Activated naive CD4-positive, alpha-beta T cell treated with anti-CD3 and anti-CD28 coated beads for 36 hours (primary cell): ENCODE measurements at regions of chr19 and their contacts with region 1.

Region 1: GRCh38 chr19:16371540-16371986 is 46.9 kb downstream of the KLF2 start:
- DNase-seq: peak; percentile 93
- H3K4me3 Mint-ChIP-seq: peak overlapping the region; percentile 30
- H3K27ac Mint-ChIP-seq: peak overlapping the region; percentile 48
- H3K4me1 Mint-ChIP-seq: peaks cover 40% of the 10 kb centered on the region
- H3K27me3 Mint-ChIP-seq: peaks cover 15% of the 10 kb centered on the region

Region 2: DNA sequence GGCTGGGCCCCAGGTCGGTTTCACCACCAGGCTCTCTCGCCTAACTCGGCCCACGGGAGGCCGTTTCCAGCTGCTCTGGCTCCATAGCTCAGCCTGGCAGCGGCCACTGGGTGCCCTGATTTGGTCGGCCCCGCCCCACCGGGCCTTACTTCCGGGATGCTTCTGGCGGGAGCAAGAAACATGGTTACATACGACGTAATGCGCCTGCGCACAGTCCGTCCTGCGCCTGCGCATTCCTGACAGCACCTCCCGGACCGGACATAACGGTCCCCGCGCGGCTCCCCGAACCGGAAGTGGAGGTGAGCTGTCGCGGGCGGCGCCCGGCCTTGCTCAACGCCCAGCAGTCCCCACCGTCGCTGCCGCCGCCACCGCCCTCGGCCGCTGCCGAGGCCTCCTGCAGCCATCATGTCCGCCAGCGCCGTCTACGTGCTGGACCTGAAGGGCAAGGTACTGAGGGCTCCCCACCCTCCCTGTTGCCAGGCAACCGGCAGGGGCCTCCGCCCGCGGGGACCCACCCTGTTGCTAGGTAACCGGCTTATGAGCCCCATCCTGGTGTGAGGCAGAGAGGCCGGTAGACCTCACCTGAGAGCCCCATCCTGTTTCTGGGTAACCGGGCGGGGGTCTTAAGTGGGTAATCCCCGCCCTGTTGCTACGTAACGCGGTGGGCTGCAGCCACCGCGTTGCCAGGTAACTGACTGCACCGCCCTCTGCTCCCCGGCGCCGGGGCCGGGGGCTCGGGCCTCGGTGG is 173.8 kb before region 1 on chr19 and contains the start of gene AP1M1:
- CTCF ChIA-PET with region 1: no interaction called
- intact Hi-C with region 1: loop called (anchors 5 kb)
- DNase-seq: peak; percentile 99
- H3K4me3 Mint-ChIP-seq: peak within 1 kb of the TSS; percentile 93
- H3K27ac Mint-ChIP-seq: peak within 1 kb of the TSS; percentile 93
- H3K4me1 Mint-ChIP-seq: peaks cover 37% of the 10 kb centered on the region
- H3K27me3 Mint-ChIP-seq: no peaks in the 10 kb centered on the region
- total RNA-seq, gene AP1M1: 113 to 123 TPM

Region 3: DNA sequence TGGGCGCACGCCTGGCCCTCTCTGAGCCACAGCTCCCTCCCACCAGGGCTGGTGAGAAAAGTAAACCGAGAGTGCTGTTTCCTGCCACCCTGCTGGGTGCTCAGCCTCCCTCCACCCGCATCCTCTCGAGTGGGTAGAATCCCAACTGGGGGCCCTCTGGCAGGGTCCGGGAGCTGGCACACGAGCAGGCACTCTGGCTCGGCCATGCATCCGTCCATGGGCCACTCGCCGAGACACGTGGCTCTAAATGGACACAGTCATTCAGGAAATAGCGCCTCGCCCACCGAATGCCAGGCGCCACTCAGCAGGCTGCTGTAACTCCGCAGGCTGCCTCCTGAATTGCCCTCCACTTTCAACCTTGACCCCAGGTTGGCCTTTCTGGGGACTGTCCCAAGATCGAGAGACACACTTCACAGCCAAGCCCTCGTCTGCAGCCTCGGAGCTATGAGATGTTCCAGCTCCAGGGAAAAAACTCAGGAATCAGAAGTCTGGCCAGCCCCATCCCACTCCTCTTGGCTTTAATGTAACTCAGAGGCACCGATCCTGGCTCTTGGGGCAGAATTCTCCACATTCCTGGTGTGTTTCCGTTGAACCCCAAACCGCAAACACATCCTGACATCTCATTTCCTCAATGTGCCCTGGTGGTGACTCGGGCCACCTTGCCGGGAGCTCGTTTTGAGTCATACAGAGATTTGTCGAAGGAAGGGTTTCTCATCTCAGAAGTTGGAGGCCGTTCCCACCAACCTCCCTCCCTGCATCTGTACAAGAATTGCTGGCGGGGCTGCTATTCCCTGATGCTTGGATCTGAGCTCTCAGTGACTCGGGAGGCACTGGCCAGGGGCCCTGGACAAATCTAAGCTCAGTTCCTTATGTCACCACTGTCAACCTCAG is 32.8 kb before region 1 on chr19:
- CTCF ChIA-PET with region 1: interaction called, 7 read pairs
- intact Hi-C with region 1: loop called (anchors 1 kb)
- DNase-seq: peak; percentile 89
- H3K4me3 Mint-ChIP-seq: peak overlapping the region; percentile 63
- H3K27ac Mint-ChIP-seq: peak overlapping the region; percentile 30
- H3K4me1 Mint-ChIP-seq: peaks cover 61% of the 10 kb centered on the region
- H3K27me3 Mint-ChIP-seq: peaks cover 3% of the 10 kb centered on the region

Region 4: DNA sequence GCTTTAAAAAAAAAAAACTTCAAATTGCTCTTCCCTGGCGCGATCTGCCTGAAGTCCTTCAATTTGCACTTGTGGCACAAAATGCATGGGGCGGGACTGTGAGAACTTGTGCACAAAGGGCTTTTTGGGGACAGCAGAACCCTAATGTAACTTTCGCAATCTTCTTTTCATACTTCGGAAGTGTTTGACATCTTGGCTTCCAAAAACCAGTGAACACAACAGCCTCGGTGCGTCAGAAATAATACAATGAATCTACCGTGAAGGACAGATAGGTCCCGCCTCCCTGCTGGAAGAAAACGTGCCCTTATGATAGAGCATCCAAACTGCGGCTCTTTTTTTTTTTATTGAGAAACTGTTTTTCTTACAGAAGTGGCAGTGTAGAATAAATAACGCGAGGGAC is 10.3 kb before region 1 on chr19:
- CTCF ChIA-PET with region 1: interaction called, 3 read pairs
- intact Hi-C with region 1: loop called (anchors 1 kb)
- DNase-seq: no peak
- H3K4me3 Mint-ChIP-seq: no peak overlapping the region
- H3K27ac Mint-ChIP-seq: no peak overlapping the region
- H3K4me1 Mint-ChIP-seq: peaks cover 85% of the 10 kb centered on the region
- H3K27me3 Mint-ChIP-seq: peaks cover 6% of the 10 kb centered on the region